ENCODE measurements at regions of chr3 and their contacts with region 1.

Region 1: DNA sequence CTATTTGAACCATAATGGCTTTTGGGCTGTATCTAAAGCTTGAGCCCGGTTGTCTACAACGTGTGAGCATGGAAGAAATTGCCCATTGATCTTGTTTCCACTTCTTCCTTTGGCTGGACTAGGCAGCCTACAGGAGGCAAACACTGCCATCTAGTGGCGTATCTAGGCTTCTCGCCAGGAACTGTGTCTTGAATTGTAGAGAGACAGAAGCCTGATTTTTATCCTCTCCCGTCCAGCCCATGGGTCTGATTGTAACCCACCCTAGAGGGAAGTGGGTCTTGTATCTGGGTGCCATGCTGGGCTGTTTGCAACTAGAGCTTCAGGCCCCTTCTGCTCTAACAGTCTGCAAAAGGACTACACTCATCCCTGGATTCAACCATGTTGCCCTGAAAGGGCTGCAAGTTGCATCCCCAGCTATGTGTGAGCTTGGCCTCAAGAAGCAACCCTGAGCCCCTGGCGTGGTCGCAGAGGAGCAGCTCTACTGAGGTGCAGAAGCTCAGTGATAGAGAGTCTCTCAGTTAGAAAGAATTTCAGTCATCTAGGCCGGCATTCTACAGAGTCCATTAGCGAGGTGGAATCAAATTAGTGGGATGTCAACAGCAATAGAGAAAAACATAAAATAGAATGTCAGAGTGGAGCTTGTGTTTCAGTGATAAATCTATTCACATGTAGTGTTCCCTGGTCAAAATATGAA is 170.2 kb upstream of the UMPS start:
- DNase-seq: peak; percentile 72
- ATAC-seq: peak; percentile 90
- H3K4me3 ChIP-seq: no peak overlapping the region
- H3K27ac ChIP-seq: no peak overlapping the region
- H3K4me1 ChIP-seq: peaks cover 10 to 17% of the 10 kb centered on the region in 2 experiments; a peak in 3 of 4 replicates
- H3K27me3 ChIP-seq: peaks cover 41% of the 10 kb centered on the region; the same call in 1 of the 2 replicates
- CTCF ChIP-seq: peak; percentile 69 to 94 (median 91)
- POLR2A ChIP-seq: no peak
- RAD21 ChIP-seq: peak; percentile 83

Region 2: GRCh38 chr3:123642182-123642956 is 917.7 kb before region 1 on chr3:
- CTCF ChIA-PET with region 1: interaction called, 3 read pairs
- POLR2A ChIA-PET with region 1: no interaction called
- RAD21 ChIA-PET with region 1: no interaction called
- intact Hi-C with region 1: loop called (anchors 10 kb)
- DNase-seq: peak; percentile 93
- ATAC-seq: peak; percentile 100
- H3K4me3 ChIP-seq: no peak overlapping the region
- H3K27ac ChIP-seq: no peak overlapping the region
- H3K4me1 ChIP-seq: peaks cover 0 to 8% of the 10 kb centered on the region in 2 experiments; a peak in 2 of 4 replicates
- H3K27me3 ChIP-seq: no peaks in the 10 kb centered on the region
- CTCF ChIP-seq: peak; percentile 91 to 99 (median 98)
- POLR2A ChIP-seq: no peak
- RAD21 ChIP-seq: peak; percentile 84

Region 3: GRCh38 chr3:124650798-124651197 is 90.8 kb after region 1 on chr3:
- CTCF ChIA-PET with region 1: no interaction called
- POLR2A ChIA-PET with region 1: no interaction called
- RAD21 ChIA-PET with region 1: no interaction called
- intact Hi-C with region 1: no loop called
- DNase-seq: no peak
- ATAC-seq: no peak
- H3K4me3 ChIP-seq: no peak overlapping the region
- H3K27ac ChIP-seq: no peak overlapping the region
- H3K4me1 ChIP-seq: no peaks in the 10 kb centered on the region
- H3K27me3 ChIP-seq: no peaks in the 10 kb centered on the region
- CTCF ChIP-seq: no peak
- POLR2A ChIP-seq: no peak
- RAD21 ChIP-seq: no peak

Region 4: GRCh38 chr3:124688581-124689454 is 128.8 kb after region 1 on chr3:
- CTCF ChIA-PET with region 1: interaction called, 82 read pairs
- POLR2A ChIA-PET with region 1: interaction called, 3 read pairs
- RAD21 ChIA-PET with region 1: interaction called, 4 to 13 read pairs
- intact Hi-C with region 1: loop called (anchors 1 kb)
- DNase-seq: peak; percentile 69
- ATAC-seq: peak; percentile 98
- H3K4me3 ChIP-seq: no peak overlapping the region
- H3K27ac ChIP-seq: no peak overlapping the region
- H3K4me1 ChIP-seq: 0 out of 4 replicates have a peak, but pooled peaks cover 0 to 6% of the 10 kb centered on the region in 2 experiments
- H3K27me3 ChIP-seq: no peaks in the 10 kb centered on the region
- CTCF ChIP-seq: peak; percentile 82 to 88 (median 85)
- POLR2A ChIP-seq: no peak
- RAD21 ChIP-seq: peak; percentile 95

Region 5: DNA sequence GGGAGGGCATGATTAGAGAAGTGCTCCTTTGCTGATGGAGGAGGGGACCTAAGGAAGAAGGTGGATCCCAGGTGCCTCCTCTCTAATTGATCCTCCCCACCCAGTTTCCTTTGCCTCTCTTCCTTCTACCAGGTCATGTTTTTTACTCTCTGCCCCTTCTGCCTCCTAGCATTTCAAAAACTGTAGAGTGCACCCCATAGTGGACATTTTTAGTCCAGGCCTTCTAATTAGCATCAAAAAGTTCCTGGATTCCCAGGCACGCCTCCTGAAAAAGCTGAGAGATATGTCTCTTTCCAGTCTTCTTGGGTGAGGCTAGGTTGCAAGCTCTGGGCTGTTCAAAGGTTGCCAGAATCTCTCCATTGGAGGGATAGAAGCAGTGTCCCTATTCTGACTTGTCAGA is 345.8 kb after region 1 on chr3:
- CTCF ChIA-PET with region 1: interaction called, 5 read pairs
- POLR2A ChIA-PET with region 1: no interaction called
- RAD21 ChIA-PET with region 1: no interaction called
- intact Hi-C with region 1: loop called (anchors 5 kb)
- DNase-seq: no peak
- ATAC-seq: peak; percentile 46
- H3K4me3 ChIP-seq: no peak overlapping the region
- H3K27ac ChIP-seq: no peak overlapping the region
- H3K4me1 ChIP-seq: peaks cover 0 to 8% of the 10 kb centered on the region in 2 experiments; a peak in 2 of 4 replicates
- H3K27me3 ChIP-seq: peaks cover 4% of the 10 kb centered on the region
- CTCF ChIP-seq: 0 out of 6 replicates have a peak, but pooled peaks have one; percentile 6 to 18 (median 10)
- POLR2A ChIP-seq: no peak
- RAD21 ChIP-seq: peak; percentile 26; the same call in 1 of the 2 replicates

Region 6: GRCh38 chr3:125585595-125586223 is 1025.7 kb after region 1 on chr3:
- CTCF ChIA-PET with region 1: no interaction called
- POLR2A ChIA-PET with region 1: no interaction called
- RAD21 ChIA-PET with region 1: no interaction called
- intact Hi-C with region 1: loop called (anchors 10 kb)
- DNase-seq: peak; percentile 45
- ATAC-seq: peak; percentile 87
- H3K4me3 ChIP-seq: no peak overlapping the region
- H3K27ac ChIP-seq: no peak overlapping the region
- H3K4me1 ChIP-seq: no peaks in the 10 kb centered on the region
- H3K27me3 ChIP-seq: no peaks in the 10 kb centered on the region
- CTCF ChIP-seq: peak; percentile 71 to 92 (median 80); a peak in 5 of 6 replicates
- POLR2A ChIP-seq: no peak
- RAD21 ChIP-seq: peak; percentile 90